ENCODE measurements at regions of chr6 and their contacts with region 1.

Region 1: GRCh38 chr6:55953335-55953734 is 77.9 kb upstream of the BMP5 start:
- DNase-seq: no peak
- H3K4me3 ChIP-seq: no peak overlapping the region
- H3K27ac ChIP-seq: no peak overlapping the region
- H3K4me1 ChIP-seq: no peaks in the 10 kb centered on the region
- H3K27me3 ChIP-seq: no peaks in the 10 kb centered on the region
- CTCF ChIP-seq: peak in 2 of 3 experiments; percentile 9 to 34

Region 2: GRCh38 chr6:55276745-55277530 is 676.4 kb before region 1 on chr6:
- intact Hi-C with region 1: loop called (anchors 5 kb)
- DNase-seq: no peak
- H3K4me3 ChIP-seq: no peak overlapping the region
- H3K27ac ChIP-seq: no peak overlapping the region
- H3K4me1 ChIP-seq: no peaks in the 10 kb centered on the region
- H3K27me3 ChIP-seq: no peaks in the 10 kb centered on the region
- CTCF ChIP-seq: peak; percentile 3 to 38 (median 10)